ENCODE measurements at regions of chr22 and their contacts with region 1.

Region 1: GRCh38 chr22:19629720-19630419 is 84.4 kb upstream of the SEPTIN5 start:
- DNase-seq: peak; percentile 12
- H3K4me3 ChIP-seq: no peak overlapping the region
- CTCF ChIP-seq: peak; percentile 92

Region 2: DNA sequence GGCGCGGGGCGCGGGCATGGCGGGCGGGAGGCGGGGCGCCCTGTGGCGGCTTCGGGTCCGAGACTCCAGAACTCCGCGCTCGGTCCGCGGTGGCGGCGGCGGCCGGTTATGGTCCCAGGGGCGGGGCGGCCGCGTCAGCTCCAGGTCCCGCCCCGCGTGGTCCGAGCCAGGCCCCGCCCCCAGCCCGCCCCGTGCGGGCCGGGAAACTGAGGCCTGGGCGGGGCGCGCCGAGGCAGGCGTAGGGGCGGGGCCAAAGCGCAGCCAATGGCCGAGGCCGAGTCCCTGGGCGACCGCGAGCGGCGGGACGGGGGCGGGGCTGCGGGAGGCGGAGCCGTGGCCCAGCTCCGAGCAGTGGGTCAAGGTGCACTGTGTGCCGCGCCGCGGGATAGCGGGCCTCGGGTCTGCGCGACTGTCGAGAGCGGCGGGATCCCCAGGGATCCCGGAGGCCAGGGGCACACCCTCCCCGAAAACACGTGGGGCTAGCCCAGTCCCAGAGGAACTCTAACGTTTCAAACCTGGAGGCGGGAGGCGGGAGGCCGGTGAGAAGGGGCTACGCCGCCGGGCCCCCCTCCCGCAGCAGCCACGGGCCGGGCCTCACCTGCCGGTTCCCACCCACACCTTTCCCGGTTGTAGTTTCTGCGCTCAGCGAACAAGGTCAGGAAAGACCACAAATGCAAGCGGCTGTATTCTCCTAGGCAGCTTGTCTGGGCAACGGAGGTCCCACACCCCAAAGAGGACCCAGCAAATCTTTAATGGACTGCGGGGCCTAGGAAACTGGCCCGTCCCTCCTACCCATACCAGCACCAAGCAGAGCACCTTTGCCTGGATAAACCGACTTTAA is 451.0 kb before region 1 on chr22 and contains the start of gene SLC25A1:
- CTCF ChIA-PET with region 1: interaction called, 16 read pairs
- POLR2A ChIA-PET with region 1: no interaction called
- DNase-seq: no peak
- H3K4me3 ChIP-seq: peak within 1 kb of the TSS; percentile 71
- CTCF ChIP-seq: no peak

Region 3: DNA sequence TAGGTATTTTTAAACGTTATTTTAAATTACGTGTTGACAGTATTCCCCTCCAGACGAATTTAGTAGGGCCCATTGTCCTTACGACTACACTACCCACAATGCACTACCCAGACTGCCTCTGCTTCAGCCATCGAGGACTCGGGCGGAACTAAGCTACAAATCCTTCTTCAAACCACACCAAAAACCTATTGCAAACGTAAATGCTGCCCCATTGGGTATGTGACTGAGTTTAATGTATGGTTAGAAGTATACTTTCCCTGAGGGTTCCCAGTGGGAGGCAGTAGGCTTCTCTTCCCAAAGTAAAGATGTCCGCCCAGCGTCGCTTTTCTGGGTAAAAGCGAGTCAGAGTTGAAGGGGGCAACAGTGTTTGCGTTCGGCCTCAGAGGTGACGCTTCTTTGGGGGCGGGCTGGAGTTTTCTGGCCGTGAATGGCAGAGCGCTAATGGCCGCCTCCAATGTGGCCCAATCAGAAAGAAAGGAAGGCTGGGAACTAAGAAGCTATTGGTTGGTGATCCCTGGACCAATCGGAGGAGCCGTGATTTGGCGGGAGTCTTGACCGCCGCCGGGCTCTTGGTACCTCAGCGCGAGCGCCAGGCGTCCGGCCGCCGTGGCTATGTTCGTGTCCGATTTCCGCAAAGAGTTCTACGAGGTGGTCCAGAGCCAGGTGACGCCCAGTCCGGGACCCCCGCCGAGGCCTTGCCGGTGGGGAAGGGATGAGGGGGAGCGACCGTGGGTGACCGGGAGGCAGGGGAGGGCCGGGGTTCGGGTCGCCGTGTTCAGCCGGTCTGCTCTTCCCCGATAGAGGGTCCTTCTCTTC is 150.3 kb before region 1 on chr22 and contains the start of gene CDC45:
- CTCF ChIA-PET with region 1: interaction called, 19 read pairs
- POLR2A ChIA-PET with region 1: no interaction called
- DNase-seq: peak; percentile 92
- H3K4me3 ChIP-seq: peak within 1 kb of the TSS; percentile 95
- CTCF ChIP-seq: no peak

Region 4: DNA sequence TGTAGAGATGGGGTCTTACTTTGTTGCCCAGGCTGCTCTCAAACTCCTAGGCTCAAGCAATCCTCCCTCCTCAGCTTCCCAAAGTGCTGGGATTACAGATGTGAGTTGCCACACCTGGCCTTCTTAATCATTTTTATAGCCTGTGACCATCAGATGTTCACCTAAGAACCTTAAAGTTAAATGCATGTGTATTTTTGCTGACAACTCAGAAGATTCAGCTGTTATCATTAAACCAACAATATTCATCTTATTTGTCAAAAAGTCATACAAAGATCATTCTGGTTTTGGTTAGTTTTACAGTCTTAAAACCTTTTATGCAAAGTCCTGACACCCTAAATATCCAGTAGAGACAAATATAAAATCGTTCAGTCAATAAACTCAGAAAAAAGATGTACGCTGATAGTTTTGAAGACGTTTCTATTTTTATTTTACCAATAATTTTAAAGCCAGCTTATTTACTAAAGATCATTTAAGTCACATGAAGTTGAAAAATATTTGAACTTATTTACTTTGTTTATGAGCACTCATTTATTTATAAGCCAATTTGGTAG is 127.9 kb before region 1 on chr22:
- CTCF ChIA-PET with region 1: interaction called, 66 read pairs
- POLR2A ChIA-PET with region 1: no interaction called
- DNase-seq: no peak
- H3K4me3 ChIP-seq: no peak overlapping the region
- CTCF ChIP-seq: no peak

Region 5: GRCh38 chr22:19644314-19645223 is 14.7 kb after region 1 on chr22:
- CTCF ChIA-PET with region 1: interaction called, 37 read pairs
- POLR2A ChIA-PET with region 1: no interaction called
- DNase-seq: no peak
- H3K4me3 ChIP-seq: no peak overlapping the region
- CTCF ChIP-seq: no peak

Region 6: DNA sequence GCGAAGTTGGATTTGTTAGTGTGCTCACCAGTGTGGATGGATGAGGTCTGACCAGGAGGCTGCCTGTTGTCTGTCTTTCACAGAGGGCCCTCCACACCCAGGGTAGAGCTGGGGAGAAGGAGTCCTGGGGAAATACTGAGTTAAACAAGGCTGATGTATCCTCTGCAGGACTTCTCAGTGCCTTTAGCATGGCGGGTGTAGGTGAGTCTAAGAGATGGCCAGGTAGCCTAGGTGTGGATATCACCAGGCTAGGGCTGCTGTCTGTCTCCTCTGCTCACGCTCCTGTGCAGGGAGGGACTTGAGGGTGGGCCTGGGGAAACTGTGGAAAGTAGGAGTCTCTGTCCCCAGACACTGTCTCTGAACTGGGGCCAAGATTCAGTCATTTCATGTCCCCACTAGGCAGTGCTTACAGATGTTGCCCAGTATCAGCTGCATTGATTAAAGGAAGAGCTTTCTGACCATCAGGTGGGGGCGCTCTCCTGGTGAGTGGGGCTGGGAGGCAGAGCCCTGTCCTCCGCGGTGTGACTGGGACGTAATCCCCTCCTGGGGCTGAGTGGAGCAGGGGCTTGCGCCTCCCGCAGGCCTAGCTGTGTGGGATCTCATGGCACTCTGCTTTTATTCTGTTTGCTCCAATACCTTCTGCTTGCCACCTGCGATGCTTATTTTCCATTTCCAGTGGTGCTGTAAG is 556.5 kb after region 1 on chr22:
- CTCF ChIA-PET with region 1: no interaction called
- POLR2A ChIA-PET with region 1: no interaction called
- DNase-seq: no peak
- H3K4me3 ChIP-seq: no peak overlapping the region
- CTCF ChIP-seq: no peak